ENCODE measurements at regions of chr11 and their contacts with region 1.

Region 1: DNA sequence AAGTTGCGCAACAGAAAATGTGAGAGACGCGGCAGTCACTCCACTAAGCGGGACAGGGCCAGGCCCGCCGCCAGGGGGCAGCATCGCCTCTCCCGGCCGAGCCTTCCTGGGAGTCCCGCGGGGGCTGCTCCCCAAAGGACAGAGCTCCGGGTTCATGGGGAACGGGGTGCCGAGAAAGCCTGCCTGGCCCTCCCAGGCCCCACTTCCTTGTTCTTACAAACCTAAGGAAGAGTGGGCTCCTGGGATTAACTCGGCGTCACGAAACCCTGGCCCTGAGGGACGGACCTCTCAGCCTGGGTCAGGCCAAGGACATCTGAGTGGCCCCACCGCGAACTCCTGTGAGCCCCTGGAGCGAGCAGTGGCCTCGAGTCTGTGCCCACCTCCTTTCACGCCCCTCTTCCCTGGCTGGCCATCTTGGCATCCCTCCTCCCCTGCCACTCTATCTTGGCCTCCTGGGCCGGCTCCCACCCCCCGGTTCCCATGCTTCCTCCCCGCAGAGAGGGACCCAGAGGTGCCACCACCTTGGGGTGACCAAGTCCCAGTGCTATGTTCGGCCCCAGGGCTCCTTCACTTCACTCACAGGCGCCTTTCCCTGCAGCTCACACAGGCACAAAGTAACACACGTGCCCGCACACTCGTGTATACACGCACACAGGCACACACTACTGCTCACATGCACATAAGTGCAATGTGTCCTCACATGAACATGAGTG is 99.9 kb upstream of the FGF3 start:
- DNase-seq: no peak
- H3K4me3 ChIP-seq: no peak overlapping the region
- CTCF ChIP-seq: peak; percentile 94

Region 2: GRCh38 chr11:69899957-69900821 is 18.9 kb before region 1 on chr11:
- CTCF ChIA-PET with region 1: interaction called, 11 read pairs
- POLR2A ChIA-PET with region 1: no interaction called
- DNase-seq: no peak
- H3K4me3 ChIP-seq: no peak overlapping the region
- CTCF ChIP-seq: no peak

Region 3: DNA sequence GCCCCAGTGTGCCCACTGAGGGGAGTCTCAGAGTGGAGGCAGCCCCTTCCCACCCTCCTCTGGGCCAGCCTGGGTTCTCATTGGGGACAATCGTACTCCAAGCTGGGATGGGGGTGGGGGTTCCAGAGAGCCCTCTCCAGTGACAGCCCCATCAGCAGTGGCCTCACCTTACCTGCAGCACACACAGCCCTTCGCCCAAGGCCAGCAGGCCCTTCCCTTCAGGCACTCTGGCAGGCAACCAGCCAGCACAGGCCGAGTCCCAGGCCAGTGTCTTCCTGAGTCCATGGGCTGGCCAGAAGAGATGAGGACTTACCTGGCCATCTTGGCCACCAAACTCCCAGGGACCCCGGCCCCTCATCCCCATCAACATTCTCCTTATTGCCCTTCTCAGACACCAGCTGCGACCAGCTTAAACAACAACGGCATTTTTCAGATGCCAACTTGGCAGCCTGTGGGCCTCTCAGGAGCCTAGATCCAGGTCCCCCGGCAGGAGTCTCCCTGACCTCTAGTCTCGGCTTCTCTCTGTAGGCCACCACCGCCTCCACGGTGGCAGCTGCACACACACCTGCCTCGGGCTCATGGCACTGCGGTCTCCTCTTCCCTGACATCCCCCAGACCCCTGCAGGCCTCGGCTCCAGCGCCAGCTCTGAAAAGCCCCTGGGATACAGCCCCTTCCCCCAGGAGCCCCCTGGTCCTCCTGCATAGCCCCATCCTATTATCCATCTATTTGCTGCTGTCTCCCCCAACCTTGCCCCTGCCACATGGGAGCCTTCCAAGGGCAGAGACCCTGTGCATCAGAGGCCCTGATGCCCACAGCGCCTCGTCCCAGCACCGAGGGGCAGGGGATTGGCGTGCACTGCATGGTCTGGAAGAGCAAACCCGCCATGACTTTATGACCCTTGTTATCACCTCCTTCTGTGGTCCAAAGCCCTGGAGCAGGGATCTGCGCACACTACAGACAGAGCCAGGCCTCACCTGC is 11.3 kb after region 1 on chr11:
- CTCF ChIA-PET with region 1: interaction called, 25 read pairs
- POLR2A ChIA-PET with region 1: no interaction called
- DNase-seq: no peak
- H3K4me3 ChIP-seq: no peak overlapping the region
- CTCF ChIP-seq: no peak

Region 4: DNA sequence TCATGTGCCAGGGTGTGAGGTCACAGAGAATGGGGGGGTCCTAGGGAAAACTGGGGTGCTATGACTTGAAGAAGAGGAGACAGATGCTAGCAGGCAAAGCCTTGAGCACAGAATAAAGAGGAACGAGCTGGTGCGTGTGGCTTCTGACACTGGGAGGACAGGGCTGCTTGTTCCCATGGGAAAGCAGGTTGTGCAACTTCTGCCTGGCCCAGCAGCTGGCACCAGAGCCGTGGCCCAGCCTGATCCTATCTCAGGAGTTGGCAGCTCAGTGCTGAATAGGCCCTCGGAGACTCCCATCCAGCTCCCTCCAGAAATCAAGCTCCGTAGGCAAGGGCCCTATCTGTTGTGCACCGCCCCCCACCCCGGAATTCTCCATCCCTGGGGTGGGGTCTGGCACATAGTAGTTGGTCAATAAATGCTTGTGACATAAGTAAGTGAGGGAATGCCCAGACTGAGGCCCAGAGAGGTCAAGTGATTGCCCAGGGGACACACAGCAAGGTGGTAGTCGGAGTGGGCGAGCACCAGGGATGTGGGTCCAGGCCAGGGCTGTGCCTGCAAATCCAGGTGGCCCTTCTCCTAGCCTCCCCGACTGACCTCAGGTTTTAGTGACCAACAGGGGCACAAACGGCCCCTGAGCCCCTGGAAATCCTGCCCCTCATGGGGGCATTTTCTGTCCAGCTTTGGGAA is 264.5 kb after region 1 on chr11:
- CTCF ChIA-PET with region 1: interaction called, 10 read pairs
- POLR2A ChIA-PET with region 1: no interaction called
- DNase-seq: no peak
- H3K4me3 ChIP-seq: no peak overlapping the region
- CTCF ChIP-seq: no peak

Region 5: GRCh38 chr11:70191495-70192140 is 272.5 kb after region 1 on chr11:
- CTCF ChIA-PET with region 1: interaction called, 200 read pairs
- POLR2A ChIA-PET with region 1: no interaction called
- DNase-seq: no peak
- H3K4me3 ChIP-seq: no peak overlapping the region
- CTCF ChIP-seq: peak; percentile 97

Region 6: GRCh38 chr11:70202898-70203748 is 284.0 kb after region 1 on chr11 and contains the start of gene FADD:
- CTCF ChIA-PET with region 1: interaction called, 200 read pairs
- POLR2A ChIA-PET with region 1: no interaction called
- DNase-seq: peak; percentile 41
- H3K4me3 ChIP-seq: peak within 1 kb of the TSS; percentile 99
- CTCF ChIP-seq: no peak

Measured in AG04449 (cell line).